ENCODE measurements at regions of chr14 and their contacts with region 1.

Region 1: GRCh38 chr14:34098045-34098984 is 147.4 kb upstream of the EGLN3 start:
- DNase-seq: peak; percentile 19
- H3K4me3 Mint-ChIP-seq: no peak overlapping the region
- H3K27ac Mint-ChIP-seq: no peak overlapping the region
- H3K4me1 Mint-ChIP-seq: no peaks in the 10 kb centered on the region
- H3K27me3 Mint-ChIP-seq: no peaks in the 10 kb centered on the region

Region 2: DNA sequence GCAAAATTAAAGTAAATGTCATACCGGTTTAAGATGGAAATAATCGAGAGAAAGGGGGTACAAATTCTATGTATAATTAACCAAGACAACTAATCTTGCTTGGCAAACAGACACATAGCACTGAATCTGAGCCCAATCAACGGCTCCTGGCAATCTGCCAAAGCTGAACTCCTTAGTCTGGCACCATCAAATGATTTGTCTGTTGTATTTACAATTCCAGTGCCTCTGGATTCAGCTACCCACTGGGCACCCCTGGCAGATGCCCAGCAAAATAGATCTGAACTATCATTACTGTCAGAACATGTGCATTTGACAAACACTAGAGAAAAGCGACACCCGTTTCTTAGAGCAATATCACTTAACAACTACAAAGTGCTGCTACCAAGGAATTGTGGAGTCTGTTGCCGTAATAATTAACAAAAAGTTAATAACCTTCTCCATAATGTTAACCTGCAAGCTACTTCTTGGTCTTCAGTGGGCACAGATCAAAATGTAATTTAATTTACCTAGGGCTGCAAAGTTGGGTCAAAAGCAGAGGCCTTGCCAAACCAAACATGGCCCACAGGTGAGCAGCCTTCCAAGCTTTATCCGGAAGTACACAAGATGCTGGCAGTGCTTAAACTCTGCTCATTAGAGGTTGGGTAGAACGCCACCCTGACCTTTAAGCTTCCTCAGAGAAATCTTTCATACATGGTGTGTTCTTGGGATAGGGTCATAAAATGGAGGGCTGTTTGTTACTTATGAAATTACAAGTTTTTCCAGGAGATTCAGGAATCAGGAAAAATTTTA is 155.0 kb before region 1 on chr14:
- CTCF ChIA-PET with region 1: no interaction called
- intact Hi-C with region 1: loop called (anchors 10 kb)
- DNase-seq: no peak
- H3K4me3 Mint-ChIP-seq: no peak overlapping the region
- H3K27ac Mint-ChIP-seq: no peak overlapping the region
- H3K4me1 Mint-ChIP-seq: peaks cover 2% of the 10 kb centered on the region
- H3K27me3 Mint-ChIP-seq: peaks cover 2% of the 10 kb centered on the region

Region 3: GRCh38 chr14:34075042-34075744 is 23.1 kb before region 1 on chr14:
- CTCF ChIA-PET with region 1: no interaction called
- intact Hi-C with region 1: no loop called
- DNase-seq: no peak
- H3K4me3 Mint-ChIP-seq: no peak overlapping the region
- H3K27ac Mint-ChIP-seq: no peak overlapping the region
- H3K4me1 Mint-ChIP-seq: no peaks in the 10 kb centered on the region
- H3K27me3 Mint-ChIP-seq: no peaks in the 10 kb centered on the region